MCF 10A (cell line): ENCODE measurements at regions of chr12 and their contacts with region 1.

Region 1: DNA sequence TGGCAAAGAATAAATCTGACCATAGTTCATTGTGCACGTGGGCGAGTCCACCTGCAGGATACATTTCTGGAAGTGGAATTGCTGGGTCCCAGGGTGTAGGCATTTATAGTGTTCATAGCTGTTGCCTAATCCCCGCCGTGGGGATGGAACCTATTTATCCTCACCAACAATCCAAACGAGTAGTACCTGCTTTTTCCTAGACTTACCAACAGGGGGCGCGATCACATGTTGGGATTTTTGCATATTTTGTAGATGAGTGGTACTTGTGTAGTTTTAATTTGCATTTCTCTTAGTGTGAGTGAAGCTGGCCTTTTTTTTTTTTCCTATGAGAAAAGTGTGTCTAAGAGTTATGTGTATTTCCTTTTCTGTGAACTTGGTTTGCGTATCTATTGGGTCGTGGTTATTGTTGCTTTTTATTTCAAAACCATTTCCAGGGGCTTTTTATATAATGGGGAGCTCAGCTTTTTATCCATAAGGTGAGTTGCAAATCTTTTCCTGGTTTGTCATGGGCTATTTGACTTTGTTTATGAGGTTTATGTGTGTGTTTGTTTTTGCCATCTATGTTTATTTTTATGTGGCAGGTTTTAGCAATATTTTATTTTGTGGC is 67.2 kb downstream of the CCDC92 start:
- DNase-seq: peak; percentile 88
- H3K4me3 Mint-ChIP-seq: no peak overlapping the region
- H3K27ac Mint-ChIP-seq: no peak overlapping the region
- H3K4me1 Mint-ChIP-seq: peaks cover 9% of the 10 kb centered on the region
- H3K27me3 Mint-ChIP-seq: peaks cover 23% of the 10 kb centered on the region
- CTCF ChIP-seq: peak; percentile 77

Region 2: DNA sequence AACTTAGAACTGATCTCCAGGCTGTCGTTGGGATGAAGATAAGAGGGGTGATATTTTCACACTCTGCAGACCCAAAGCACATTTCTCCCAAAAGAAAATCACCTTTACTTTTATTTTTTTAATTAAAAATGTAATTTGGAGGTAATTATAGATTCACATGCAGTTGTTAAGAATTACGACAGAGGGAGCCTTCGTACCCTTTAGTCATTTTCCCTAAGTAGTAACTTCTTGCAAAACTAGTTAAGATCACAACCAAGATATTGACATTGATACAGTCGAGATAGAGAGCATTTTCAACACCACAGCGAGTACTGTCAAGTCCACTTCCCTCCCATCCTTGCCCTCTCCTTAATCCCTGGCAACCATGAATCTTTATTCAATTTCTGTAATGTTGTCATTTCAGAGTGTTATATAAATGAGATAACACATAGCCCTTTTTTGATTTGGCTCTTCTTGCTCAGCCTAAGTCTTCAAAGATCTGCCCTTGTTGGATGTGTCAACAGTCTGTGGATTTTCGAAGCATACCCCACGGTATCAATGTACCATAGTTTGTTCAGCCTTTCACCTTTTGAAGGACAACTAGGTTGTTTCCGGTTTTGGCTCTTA is 103.7 kb before region 1 on chr12:
- CTCF ChIA-PET with region 1: interaction called, 4 read pairs
- POLR2A ChIA-PET with region 1: interaction called, 3 read pairs
- intact Hi-C with region 1: loop called (anchors 5 kb)
- DNase-seq: peak; percentile 50
- H3K4me3 Mint-ChIP-seq: no peak overlapping the region
- H3K27ac Mint-ChIP-seq: no peak overlapping the region
- H3K4me1 Mint-ChIP-seq: peaks cover 5% of the 10 kb centered on the region
- H3K27me3 Mint-ChIP-seq: peaks cover 3% of the 10 kb centered on the region
- CTCF ChIP-seq: peak; percentile 62

Region 3: GRCh38 chr12:123972457-123973401 is 67.3 kb after region 1 on chr12 and contains the starts of genes CCDC92 and ZNF664:
- CTCF ChIA-PET with region 1: interaction called, 3 read pairs
- POLR2A ChIA-PET with region 1: no interaction called
- intact Hi-C with region 1: loop called (anchors 2 kb)
- DNase-seq: peak; percentile 83
- H3K4me3 Mint-ChIP-seq: peak within 1 kb of the TSS; percentile 95
- H3K27ac Mint-ChIP-seq: peak within 1 kb of the TSS; percentile 92
- H3K4me1 Mint-ChIP-seq: peaks cover 24% of the 10 kb centered on the region
- H3K27me3 Mint-ChIP-seq: no peaks in the 10 kb centered on the region
- CTCF ChIP-seq: peak; percentile 21
- total RNA-seq, gene CCDC92: 30.9 and 32.3 TPM in 2 replicates
- total RNA-seq, gene ZNF664: 123 and 141 TPM in 2 replicates